ENCODE measurements at regions of chr13 and their contacts with region 1.

Region 1: GRCh38 chr13:42991892-42992763 is at the start of gene EPSTI1:
- DNase-seq: no peak
- ATAC-seq: peak; percentile 82
- H3K4me3 ChIP-seq: peak within 1 kb of the TSS; percentile 86
- H3K27ac ChIP-seq: peak within 1 kb of the TSS; percentile 99
- H3K4me1 ChIP-seq: peaks cover 28% of the 10 kb centered on the region
- H3K27me3 ChIP-seq: no peaks in the 10 kb centered on the region
- CTCF ChIP-seq: no peak
- EP300 ChIP-seq: peak in 1 of 2 experiments; percentile 67; a peak in 1 of 4 replicates
- POLR2A ChIP-seq: peak; percentile 85
- RAD21 ChIP-seq: no peak
- polyA plus RNA-seq, gene EPSTI1: 4.7 to 8.9 TPM

Region 2: GRCh38 chr13:43023289-43023951 is 31.3 kb after region 1 on chr13 and contains the start of gene DNAJC15:
- CTCF ChIA-PET with region 1: interaction called, 9 read pairs
- POLR2A ChIA-PET with region 1: interaction called, 49 read pairs
- RAD21 ChIA-PET with region 1: interaction called, 33 read pairs
- SMC1A ChIA-PET with region 1: interaction called, 150 read pairs
- in situ Hi-C with region 1: no loop called
- intact Hi-C with region 1: loop called (anchors 1 kb)
- DNase-seq: peak; percentile 57
- ATAC-seq: peak; percentile 89
- H3K4me3 ChIP-seq: peak within 1 kb of the TSS; percentile 93
- H3K27ac ChIP-seq: peak within 1 kb of the TSS; percentile 83
- H3K4me1 ChIP-seq: peaks cover 6% of the 10 kb centered on the region
- H3K27me3 ChIP-seq: no peaks in the 10 kb centered on the region
- CTCF ChIP-seq: peak; percentile 22 to 31 (median 30); a peak in 3 of 6 replicates
- EP300 ChIP-seq: no peak
- POLR2A ChIP-seq: peak; percentile 97
- RAD21 ChIP-seq: peak; percentile 25; the same call in 1 of the 2 replicates
- polyA plus RNA-seq, gene DNAJC15: 102 to 104 TPM

Region 3: GRCh38 chr13:43054803-43055802 is 63.0 kb after region 1 on chr13:
- CTCF ChIA-PET with region 1: interaction called, 4 read pairs
- POLR2A ChIA-PET with region 1: interaction called, 4 read pairs
- RAD21 ChIA-PET with region 1: interaction called, 19 read pairs
- SMC1A ChIA-PET with region 1: interaction called, 12 read pairs
- in situ Hi-C with region 1: no loop called
- intact Hi-C with region 1: no loop called
- DNase-seq: no peak
- ATAC-seq: peak; percentile 56
- H3K4me3 ChIP-seq: peak overlapping the region; percentile 74
- H3K27ac ChIP-seq: peak overlapping the region; percentile 71
- H3K4me1 ChIP-seq: peaks cover 25% of the 10 kb centered on the region
- H3K27me3 ChIP-seq: no peaks in the 10 kb centered on the region
- CTCF ChIP-seq: no peak
- EP300 ChIP-seq: no peak
- POLR2A ChIP-seq: no peak
- RAD21 ChIP-seq: no peak

Region 4: DNA sequence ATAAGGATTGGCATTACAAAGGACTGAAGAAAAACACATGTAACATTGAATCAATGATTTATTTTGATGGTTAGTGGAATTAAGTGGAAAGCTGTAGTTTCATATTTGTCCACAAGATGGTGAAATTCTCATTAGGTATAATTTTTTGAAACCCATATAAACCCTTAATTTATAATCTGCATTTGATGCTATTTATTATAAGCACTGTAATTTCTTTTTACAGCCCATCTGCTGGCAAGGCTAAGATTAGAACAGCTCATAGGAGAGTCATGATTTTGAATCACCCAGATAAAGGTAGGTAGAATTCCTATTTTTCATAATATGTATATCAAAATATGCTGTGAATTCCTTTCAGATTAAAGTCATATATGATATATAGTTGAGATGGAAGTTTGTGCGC is 93.4 kb after region 1 on chr13:
- CTCF ChIA-PET with region 1: interaction called, 6 read pairs
- POLR2A ChIA-PET with region 1: interaction called, 5 read pairs
- RAD21 ChIA-PET with region 1: interaction called, 5 read pairs
- SMC1A ChIA-PET with region 1: interaction called, 36 read pairs
- in situ Hi-C with region 1: no loop called
- intact Hi-C with region 1: no loop called
- DNase-seq: no peak
- ATAC-seq: no peak
- H3K4me3 ChIP-seq: no peak overlapping the region
- H3K27ac ChIP-seq: no peak overlapping the region
- H3K4me1 ChIP-seq: peaks cover 2% of the 10 kb centered on the region; the same call in 1 of the 2 replicates
- H3K27me3 ChIP-seq: no peaks in the 10 kb centered on the region
- CTCF ChIP-seq: peak; percentile 3 to 44 (median 30); a peak in 2 of 6 replicates
- EP300 ChIP-seq: no peak
- POLR2A ChIP-seq: no peak
- RAD21 ChIP-seq: peak; percentile 36; the same call in 1 of the 2 replicates

Region 5: GRCh38 chr13:43139211-43139610 is 147.1 kb after region 1 on chr13:
- CTCF ChIA-PET with region 1: no interaction called
- POLR2A ChIA-PET with region 1: no interaction called
- RAD21 ChIA-PET with region 1: no interaction called
- SMC1A ChIA-PET with region 1: no interaction called
- in situ Hi-C with region 1: no loop called
- intact Hi-C with region 1: no loop called
- DNase-seq: no peak
- ATAC-seq: no peak
- H3K4me3 ChIP-seq: no peak overlapping the region
- H3K27ac ChIP-seq: no peak overlapping the region
- H3K4me1 ChIP-seq: no peaks in the 10 kb centered on the region
- H3K27me3 ChIP-seq: no peaks in the 10 kb centered on the region; a peak in 1 of 4 replicates
- CTCF ChIP-seq: no peak
- EP300 ChIP-seq: no peak
- POLR2A ChIP-seq: no peak
- RAD21 ChIP-seq: no peak

Region 6: GRCh38 chr13:43206838-43207237 is 214.7 kb after region 1 on chr13:
- CTCF ChIA-PET with region 1: no interaction called
- POLR2A ChIA-PET with region 1: no interaction called
- RAD21 ChIA-PET with region 1: no interaction called
- SMC1A ChIA-PET with region 1: no interaction called
- in situ Hi-C with region 1: no loop called
- intact Hi-C with region 1: no loop called
- DNase-seq: no peak
- ATAC-seq: no peak
- H3K4me3 ChIP-seq: no peak overlapping the region
- H3K27ac ChIP-seq: no peak overlapping the region
- H3K4me1 ChIP-seq: no peaks in the 10 kb centered on the region
- H3K27me3 ChIP-seq: no peaks in the 10 kb centered on the region; a peak in 2 of 4 replicates
- CTCF ChIP-seq: no peak
- EP300 ChIP-seq: no peak
- POLR2A ChIP-seq: no peak
- RAD21 ChIP-seq: no peak

Measured in GM12878 (cell line).